ENCODE measurements at regions of chr4 and their contacts with region 1.

Region 1: DNA sequence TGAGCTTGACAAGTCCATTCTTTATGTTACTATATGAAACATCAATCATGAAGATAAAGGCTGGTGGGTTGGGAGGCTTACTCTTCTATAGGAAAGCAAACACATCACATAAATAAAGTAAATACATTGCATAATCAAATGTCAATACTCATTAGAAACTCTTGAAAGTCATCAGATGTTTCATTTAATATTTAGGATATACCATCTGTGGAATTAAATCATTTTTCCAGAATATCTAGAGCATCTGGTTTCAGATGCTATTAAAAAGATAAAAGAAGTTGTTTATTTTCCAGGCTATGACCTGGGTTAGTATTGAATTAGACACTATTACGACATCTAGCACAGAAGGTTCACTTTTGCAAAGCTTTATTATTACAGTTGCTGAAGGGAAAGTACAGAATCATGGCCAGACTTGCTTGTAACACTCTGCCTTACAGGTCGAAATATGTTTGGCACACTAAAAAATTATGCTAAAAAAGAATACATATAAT is 72.6 kb downstream of the METTL14 start:
- DNase-seq: no peak

Region 2: DNA sequence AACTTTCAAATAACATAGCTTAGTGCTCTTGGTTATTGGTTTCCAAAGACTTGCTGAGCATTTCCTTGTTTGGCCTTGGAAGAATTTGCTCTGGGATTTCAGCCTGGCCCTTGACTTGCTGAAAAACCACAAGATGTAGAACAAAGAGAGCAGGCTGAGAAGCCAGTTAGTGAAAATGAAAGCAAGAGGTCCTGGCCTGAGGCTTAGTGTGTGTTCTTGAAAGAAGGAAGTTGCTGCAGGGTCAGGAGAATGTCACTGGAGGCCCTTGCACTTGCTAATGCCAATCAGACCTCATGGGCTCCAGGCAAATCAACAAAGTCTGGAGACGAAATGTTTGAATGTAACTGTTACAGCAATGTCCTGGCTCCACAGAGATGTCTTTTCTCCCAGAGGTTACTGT is 210.2 kb after region 1 on chr4:
- intact Hi-C with region 1: loop called (anchors 10 kb)
- DNase-seq: peak in 28 of 42 donors; percentile 2 to 71 (median 29)

Region 3: DNA sequence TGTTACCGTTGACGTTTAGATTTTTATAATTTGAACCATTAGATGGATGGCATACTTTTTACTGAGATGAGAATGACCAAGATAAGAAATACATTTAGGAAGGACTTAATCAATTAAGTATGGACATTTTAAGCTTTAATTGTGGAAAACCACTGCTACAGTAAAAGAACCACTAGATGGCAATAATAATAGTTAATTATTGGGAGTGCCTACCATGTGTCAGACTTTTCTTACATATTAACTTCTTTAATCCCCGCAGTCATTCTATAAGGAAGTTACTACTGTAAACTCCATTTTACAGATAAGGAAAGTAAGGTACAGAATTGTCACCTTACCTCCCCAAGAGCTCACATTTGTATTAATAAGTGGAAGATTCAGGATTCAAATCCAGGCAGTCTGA is 329.3 kb after region 1 on chr4:
- intact Hi-C with region 1: no loop called
- DNase-seq: no peak

Measured in head of caudate nucleus (tissue), 42 donors.